ENCODE measurements at regions of chr15 and their contacts with region 1.

Region 1: DNA sequence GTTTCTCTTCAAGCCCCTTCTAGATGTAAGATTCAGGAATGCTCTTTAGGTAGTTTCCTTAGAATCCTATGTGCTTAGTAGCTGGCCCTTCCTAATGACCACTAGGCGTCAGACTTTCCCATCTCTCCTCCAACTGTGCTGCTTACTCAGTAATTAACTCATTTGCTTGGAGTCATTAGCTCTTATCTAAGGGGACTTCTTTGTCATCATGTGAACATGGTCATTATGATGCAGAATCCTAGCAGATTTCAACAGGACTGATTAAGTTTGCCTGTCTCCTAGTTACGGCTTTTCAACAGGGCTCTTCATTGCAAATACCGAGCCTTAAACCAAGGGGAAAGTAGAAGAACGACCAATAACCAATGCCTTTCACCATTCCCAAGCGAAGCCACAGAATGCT is 46.4 kb downstream of the GJD2 start:
- DNase-seq: peak; percentile 69
- H3K4me3 ChIP-seq: no peak overlapping the region
- H3K27ac ChIP-seq: no peak overlapping the region
- H3K4me1 ChIP-seq: no peaks in the 10 kb centered on the region
- H3K27me3 ChIP-seq: no peaks in the 10 kb centered on the region
- CTCF ChIP-seq: peak; percentile 64 to 71
- POLR2A ChIP-seq: no peak

Region 2: DNA sequence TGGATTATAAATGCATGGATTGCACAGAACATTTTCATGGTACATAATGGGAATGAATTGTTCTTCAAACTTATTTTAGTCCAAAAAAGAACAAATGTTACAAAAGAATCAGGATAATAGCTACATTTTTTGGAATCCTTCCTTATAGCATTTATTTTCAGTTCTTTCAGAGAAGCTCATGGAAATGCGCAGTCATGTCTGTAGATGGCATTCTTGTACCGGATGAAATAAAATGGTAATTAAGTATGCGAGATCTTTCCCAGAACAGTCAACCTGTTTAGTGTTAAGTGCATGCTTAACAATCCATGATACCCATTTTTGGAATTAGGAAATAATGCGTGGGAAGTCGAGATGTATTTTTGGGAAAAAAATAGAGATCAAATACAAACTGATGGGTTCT is 86.7 kb before region 1 on chr15:
- CTCF ChIA-PET with region 1: interaction called, 49 read pairs
- POLR2A ChIA-PET with region 1: no interaction called
- dilution Hi-C with region 1: no loop called
- intact Hi-C with region 1: no loop called
- DNase-seq: peak; percentile 69
- H3K4me3 ChIP-seq: no peak overlapping the region
- H3K27ac ChIP-seq: peak overlapping the region; percentile 61
- H3K4me1 ChIP-seq: peaks cover 41% of the 10 kb centered on the region
- H3K27me3 ChIP-seq: no peaks in the 10 kb centered on the region
- CTCF ChIP-seq: peak; percentile 16 to 38
- POLR2A ChIP-seq: no peak

Region 3: GRCh38 chr15:34721802-34722795 is 13.7 kb after region 1 on chr15:
- CTCF ChIA-PET with region 1: interaction called, 23 read pairs
- POLR2A ChIA-PET with region 1: no interaction called
- dilution Hi-C with region 1: no loop called
- intact Hi-C with region 1: no loop called
- DNase-seq: peak; percentile 58
- H3K4me3 ChIP-seq: peak overlapping the region in 2 of 3 experiments; percentile 32 to 45
- H3K27ac ChIP-seq: peak overlapping the region; percentile 55
- H3K4me1 ChIP-seq: peaks cover 11% of the 10 kb centered on the region
- H3K27me3 ChIP-seq: no peaks in the 10 kb centered on the region
- CTCF ChIP-seq: peak in 1 of 2 donors; percentile 18
- POLR2A ChIP-seq: no peak

Region 4: GRCh38 chr15:34914317-34914716 is 205.9 kb after region 1 on chr15:
- CTCF ChIA-PET with region 1: interaction called, 56 read pairs
- POLR2A ChIA-PET with region 1: no interaction called
- dilution Hi-C with region 1: no loop called
- intact Hi-C with region 1: no loop called
- DNase-seq: no peak
- H3K4me3 ChIP-seq: no peak overlapping the region
- H3K27ac ChIP-seq: no peak overlapping the region
- H3K4me1 ChIP-seq: no peaks in the 10 kb centered on the region
- H3K27me3 ChIP-seq: no peaks in the 10 kb centered on the region
- CTCF ChIP-seq: no peak
- POLR2A ChIP-seq: no peak

Region 5: GRCh38 chr15:34969340-34970097 is 261.1 kb after region 1 on chr15 and contains the start of gene AQR:
- CTCF ChIA-PET with region 1: interaction called, 17 read pairs
- POLR2A ChIA-PET with region 1: no interaction called
- dilution Hi-C with region 1: no loop called
- intact Hi-C with region 1: no loop called
- DNase-seq: peak; percentile 98
- H3K4me3 ChIP-seq: peak within 1 kb of the TSS; percentile 56 to 98 (median 95)
- H3K27ac ChIP-seq: peak within 1 kb of the TSS; percentile 46
- H3K4me1 ChIP-seq: peaks cover 11% of the 10 kb centered on the region
- H3K27me3 ChIP-seq: no peaks in the 10 kb centered on the region
- CTCF ChIP-seq: peak; percentile 68 to 93
- POLR2A ChIP-seq: peak; percentile 83
- total RNA-seq, gene AQR: 37.5 and 37.7 TPM in 2 replicates